HepG2 (cell line): ENCODE measurements at regions of chr15 and their contacts with region 1.

Region 1: GRCh38 chr15:99213187-99213811 is 36.1 kb downstream of the TTC23 start:
- DNase-seq: peak; percentile 40
- ATAC-seq: peak; percentile 85
- H3K4me3 ChIP-seq: no peak overlapping the region
- H3K27ac ChIP-seq: no peak overlapping the region
- H3K4me1 ChIP-seq: no peaks in the 10 kb centered on the region
- H3K27me3 ChIP-seq: no peaks in the 10 kb centered on the region
- CTCF ChIP-seq: peak; percentile 87
- EP300 ChIP-seq: no peak
- POLR2A ChIP-seq: no peak
- RAD21 ChIP-seq: peak; percentile 84

Region 2: GRCh38 chr15:99076552-99077308 is 136.6 kb before region 1 on chr15:
- CTCF ChIA-PET with region 1: interaction called, 4 read pairs
- POLR2A ChIA-PET with region 1: no interaction called
- in situ Hi-C with region 1: no loop called
- intact Hi-C with region 1: loop called (anchors 1 kb)
- DNase-seq: peak; percentile 67
- ATAC-seq: peak; percentile 86
- H3K4me3 ChIP-seq: peak overlapping the region in 2 of 3 experiments; percentile 27 to 31; a peak in 3 of 6 replicates
- H3K27ac ChIP-seq: no peak overlapping the region
- H3K4me1 ChIP-seq: peaks cover 9% of the 10 kb centered on the region
- H3K27me3 ChIP-seq: peaks cover 0 to 7% of the 10 kb centered on the region in 2 experiments; a peak in 2 of 5 replicates
- CTCF ChIP-seq: peak; percentile 91
- EP300 ChIP-seq: no peak
- POLR2A ChIP-seq: no peak
- RAD21 ChIP-seq: peak; percentile 77

Region 3: DNA sequence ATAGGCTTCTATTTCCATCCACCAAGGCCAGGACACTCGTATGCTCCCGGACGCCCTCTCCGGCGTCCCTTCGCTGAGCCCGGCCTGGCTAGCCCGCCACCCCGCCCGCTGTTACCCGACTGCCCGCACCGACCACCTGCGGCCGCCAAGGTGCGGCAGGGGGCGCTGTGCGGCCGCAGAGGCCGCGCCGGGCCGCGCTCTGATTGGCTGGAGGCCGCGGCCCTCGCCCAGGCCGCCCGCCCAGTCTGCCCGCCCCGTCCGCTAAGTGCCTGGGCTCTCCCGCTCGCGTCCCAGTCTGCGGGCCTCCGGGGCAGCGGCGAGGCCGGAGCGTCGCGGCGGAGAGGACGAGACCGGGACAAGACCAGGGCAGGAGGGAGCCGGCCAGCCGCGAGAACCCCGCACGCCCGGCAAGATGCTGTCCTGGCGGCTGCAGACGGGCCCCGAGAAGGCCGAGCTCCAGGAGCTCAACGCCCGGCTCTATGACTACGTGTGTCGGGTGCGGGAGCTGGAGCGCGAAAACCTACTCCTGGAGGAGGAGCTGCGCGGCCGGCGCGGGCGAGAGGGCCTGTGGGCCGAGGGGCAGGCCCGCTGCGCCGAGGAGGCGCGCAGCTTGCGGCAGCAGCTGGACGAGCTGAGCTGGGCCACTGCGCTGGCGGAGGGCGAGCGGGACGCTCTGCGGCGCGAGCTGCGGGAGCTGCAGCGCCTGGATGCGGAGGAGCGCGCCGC is 108.3 kb before region 1 on chr15 and contains the start of gene SYNM:
- CTCF ChIA-PET with region 1: interaction called, 35 read pairs
- POLR2A ChIA-PET with region 1: no interaction called
- in situ Hi-C with region 1: loop called (anchors 5 kb)
- intact Hi-C with region 1: loop called (anchors 1 kb)
- DNase-seq: peak; percentile 72
- ATAC-seq: peak; percentile 95
- H3K4me3 ChIP-seq: peak within 1 kb of the TSS; percentile 42 to 79 (median 66); a peak in 5 of 6 replicates
- H3K27ac ChIP-seq: peak within 1 kb of the TSS; percentile 59
- H3K4me1 ChIP-seq: peaks cover 28% of the 10 kb centered on the region
- H3K27me3 ChIP-seq: peaks cover 1 to 18% of the 10 kb centered on the region in 2 experiments; a peak in 3 of 5 replicates
- CTCF ChIP-seq: peak; percentile 86
- EP300 ChIP-seq: no peak
- POLR2A ChIP-seq: peak; percentile 70 to 87
- RAD21 ChIP-seq: peak; percentile 98
- total RNA-seq, gene SYNM: 3.7 and 6.0 TPM in 2 replicates

Region 4: GRCh38 chr15:99291643-99292042 is 78.3 kb after region 1 on chr15:
- CTCF ChIA-PET with region 1: no interaction called
- POLR2A ChIA-PET with region 1: no interaction called
- in situ Hi-C with region 1: no loop called
- intact Hi-C with region 1: no loop called
- DNase-seq: no peak
- ATAC-seq: no peak
- H3K4me3 ChIP-seq: no peak overlapping the region
- H3K27ac ChIP-seq: no peak overlapping the region
- H3K4me1 ChIP-seq: peaks cover 19% of the 10 kb centered on the region
- H3K27me3 ChIP-seq: no peaks in the 10 kb centered on the region
- CTCF ChIP-seq: no peak
- EP300 ChIP-seq: no peak
- POLR2A ChIP-seq: no peak
- RAD21 ChIP-seq: no peak